Mucosa of descending colon (tissue), 3 donors: ENCODE measurements at regions of chr19 and their contacts with region 1.

Region 1: DNA sequence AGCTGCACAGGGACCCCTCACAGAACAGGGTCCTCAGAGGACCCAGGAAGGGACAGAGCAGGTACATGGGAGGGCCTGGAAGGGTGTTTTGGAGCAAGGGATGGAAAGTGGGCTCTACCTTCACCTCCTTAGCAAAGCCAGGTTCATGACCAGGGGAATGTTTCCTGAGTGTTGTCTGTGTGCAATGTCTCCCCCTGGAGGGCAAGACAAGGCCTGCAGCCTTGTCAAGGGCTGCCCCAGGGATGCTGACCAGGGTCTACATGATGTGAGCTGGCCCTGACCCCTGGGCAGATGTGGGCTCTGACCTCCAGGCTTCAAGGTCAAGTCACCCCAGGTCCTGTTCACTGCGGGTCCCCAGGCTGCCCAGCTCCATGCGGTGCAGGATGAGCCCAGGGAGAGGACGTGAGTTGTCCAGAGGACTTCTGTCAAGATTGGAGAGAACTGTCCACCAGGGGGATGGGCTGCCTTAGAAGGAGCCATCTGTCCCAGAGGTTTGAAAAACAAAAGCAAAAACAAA is 1.0 kb upstream of the CEACAM1 start:
- DNase-seq: peak; percentile 75 to 90 (median 88)
- ATAC-seq: peak; percentile 88
- H3K4me3 ChIP-seq: no peak overlapping the region
- H3K4me1 ChIP-seq: peaks cover 8% of the 10 kb centered on the region
- CTCF ChIP-seq: peak; percentile 92

Region 2: DNA sequence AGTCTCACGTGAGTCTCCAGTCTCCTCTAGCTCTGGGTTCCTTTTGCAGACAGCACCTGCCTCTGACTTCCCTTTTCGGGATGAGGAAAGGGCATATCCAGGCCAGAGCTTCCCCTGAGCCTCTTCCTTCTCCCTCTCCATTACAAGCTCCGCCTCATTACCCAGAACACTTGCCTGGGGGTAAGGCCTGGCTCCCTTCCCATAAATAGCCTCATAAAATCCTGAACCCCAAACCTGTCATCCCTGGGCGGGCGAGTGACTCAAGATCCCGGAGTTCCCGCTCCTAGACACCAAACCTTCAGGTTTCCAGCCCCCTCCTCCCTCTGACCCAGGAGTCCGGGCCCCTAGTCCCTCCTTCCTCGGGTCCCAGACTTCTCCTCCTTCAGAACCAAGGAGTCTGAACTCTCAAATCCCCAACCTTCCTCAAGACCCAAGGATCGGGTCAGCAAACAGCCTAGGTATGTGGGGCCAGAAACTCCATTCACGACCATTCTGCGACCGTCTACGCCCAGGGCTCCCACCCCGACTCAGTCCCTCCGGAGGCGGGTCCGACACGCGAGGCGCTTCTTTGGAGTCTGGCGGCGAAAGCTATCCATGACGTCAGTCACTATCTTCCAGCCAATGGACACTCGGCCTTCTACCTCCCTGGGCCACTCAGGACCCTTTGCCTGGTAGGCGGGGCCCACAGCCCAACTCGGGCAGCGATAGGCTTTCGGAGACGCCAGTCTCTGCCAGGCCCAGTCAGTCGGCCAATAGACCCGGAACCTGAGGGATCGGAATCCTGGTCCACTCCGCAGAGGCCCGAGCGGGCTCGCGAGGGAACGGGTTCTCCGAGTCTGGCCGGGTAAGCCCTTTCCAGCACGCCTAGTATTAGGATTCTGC is 132.7 kb before region 1 on chr19:
- intact Hi-C with region 1: no loop called
- DNase-seq: peak; percentile 98 to 100 (median 99)
- ATAC-seq: peak; percentile 97
- H3K4me3 ChIP-seq: peak overlapping the region; percentile 37
- H3K4me1 ChIP-seq: peaks cover 20% of the 10 kb centered on the region
- CTCF ChIP-seq: peak; percentile 17

Region 3: GRCh38 chr19:42440357-42441048 is 88.8 kb before region 1 on chr19:
- intact Hi-C with region 1: loop called in 1 of 2 experiments (anchors 10 kb)
- DNase-seq: peak; percentile 81 to 89 (median 88)
- ATAC-seq: peak; percentile 76
- H3K4me3 ChIP-seq: no peak overlapping the region
- H3K4me1 ChIP-seq: peaks cover 12% of the 10 kb centered on the region
- CTCF ChIP-seq: peak; percentile 86

Region 4: DNA sequence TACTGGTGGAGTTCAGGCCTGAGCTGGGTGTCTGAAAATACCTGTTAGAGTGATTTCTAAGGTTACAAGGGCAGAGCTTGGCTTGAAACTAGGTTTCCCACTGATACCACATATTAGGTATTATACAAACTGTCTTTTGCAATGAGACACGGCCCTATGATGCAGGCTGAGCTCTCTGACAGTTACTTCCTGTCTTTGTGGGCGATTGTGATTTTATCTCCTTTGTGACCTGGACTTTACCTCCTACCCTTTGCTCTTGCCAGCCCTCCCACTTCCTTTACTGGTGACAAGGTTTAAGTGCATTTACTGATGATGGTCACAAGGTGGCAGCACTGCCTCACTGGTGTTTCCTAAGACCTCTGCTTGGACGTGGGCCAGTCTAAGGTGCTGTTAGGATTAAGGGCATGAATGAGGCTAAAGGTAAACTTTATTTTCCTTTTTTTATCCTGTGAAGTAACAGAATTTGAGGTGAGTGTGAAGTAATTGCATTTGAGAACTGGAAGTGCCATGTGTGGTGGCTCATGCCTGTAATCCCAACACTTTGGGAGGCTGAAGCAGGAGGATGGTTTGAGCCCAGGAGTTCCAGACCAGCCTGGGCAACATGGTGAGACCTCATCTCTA is 78.9 kb before region 1 on chr19:
- intact Hi-C with region 1: loop called (anchors 2 to 10 kb)
- DNase-seq: peak; percentile 67 to 94 (median 79)
- ATAC-seq: peak; percentile 99
- H3K4me3 ChIP-seq: no peak overlapping the region
- H3K4me1 ChIP-seq: peaks cover 18% of the 10 kb centered on the region
- CTCF ChIP-seq: peak; percentile 55